CD4-positive, alpha-beta T cell (primary cell): ENCODE measurements at regions of chr4 and their contacts with region 1.

Region 1: DNA sequence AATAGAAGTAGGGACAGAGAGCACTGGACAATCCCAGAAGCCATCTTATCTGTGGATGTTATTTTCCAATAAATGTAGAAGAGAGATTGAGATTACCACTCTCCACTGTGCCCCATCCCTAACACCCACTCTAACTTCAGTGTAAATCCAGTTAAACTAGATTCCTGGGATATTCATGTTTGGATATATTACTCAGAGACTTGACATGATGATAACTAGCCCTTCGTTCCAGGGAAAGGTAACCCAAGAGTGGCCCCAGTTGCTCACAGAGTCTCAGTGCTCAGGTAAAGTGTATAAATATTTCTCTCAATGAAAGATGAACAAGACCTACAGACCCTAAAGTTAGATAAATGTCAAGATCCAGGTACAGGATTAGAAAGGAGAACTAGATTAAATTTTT is 158.2 kb downstream of the LARP7 start:
- DNase-seq: no peak
- ATAC-seq: no peak
- H3K4me3 ChIP-seq: no peak overlapping the region
- H3K4me3 Mint-ChIP-seq: no peak overlapping the region
- H3K27ac ChIP-seq: no peak overlapping the region
- H3K27ac Mint-ChIP-seq: no peak overlapping the region
- H3K4me1 ChIP-seq: no peaks in the 10 kb centered on the region
- H3K4me1 Mint-ChIP-seq: no peaks in the 10 kb centered on the region
- H3K27me3 ChIP-seq: no peaks in the 10 kb centered on the region
- H3K27me3 Mint-ChIP-seq: peaks cover 14% of the 10 kb centered on the region
- CTCF ChIP-seq: no peak

Region 2: DNA sequence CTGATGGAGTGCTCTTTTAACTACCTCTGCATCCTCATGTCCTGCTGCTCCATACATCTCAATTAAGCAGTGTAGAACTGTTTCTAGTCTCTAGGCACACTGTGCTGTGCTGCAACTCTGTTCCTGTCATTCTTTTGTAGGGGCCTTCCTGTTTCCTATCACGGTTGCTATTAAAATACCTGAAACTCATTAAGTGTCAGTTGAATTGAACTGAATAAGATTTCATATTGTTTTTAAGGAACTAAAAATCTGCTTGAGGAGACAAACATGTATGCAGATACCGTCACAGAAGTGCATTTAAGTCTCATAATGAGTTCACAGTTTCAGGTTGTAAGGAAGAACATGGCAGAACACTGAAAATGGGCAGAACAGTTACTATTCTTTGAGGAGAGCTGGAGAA is 12.0 kb after region 1 on chr4:
- CTCF ChIA-PET with region 1: no interaction called
- POLR2A ChIA-PET with region 1: no interaction called
- intact Hi-C with region 1: loop called in 1 of 2 experiments (anchors 2 kb)
- DNase-seq: no peak
- ATAC-seq: no peak
- H3K4me3 ChIP-seq: no peak overlapping the region
- H3K4me3 Mint-ChIP-seq: no peak overlapping the region
- H3K27ac ChIP-seq: no peak overlapping the region
- H3K27ac Mint-ChIP-seq: no peak overlapping the region
- H3K4me1 ChIP-seq: no peaks in the 10 kb centered on the region
- H3K4me1 Mint-ChIP-seq: no peaks in the 10 kb centered on the region
- H3K27me3 ChIP-seq: no peaks in the 10 kb centered on the region
- H3K27me3 Mint-ChIP-seq: peaks cover 16% of the 10 kb centered on the region
- CTCF ChIP-seq: no peak